Activated T-helper 1 cell treated with anti-CD3 and anti-CD28 coated beads, Interleukin-12 subunit alpha, Interleukin-12 subunit beta, Interleukin-2, Interleukin-4 antibody, amounts not matched to agents 30 ng/mL and 10 ng/mL and 1 ng/mL, durations not matched to agents 14 hours and 24 hours and 36 hours (primary cell): ENCODE measurements at regions of chr3 and their contacts with region 1.

Region 1: GRCh38 chr3:27960133-27960532 is 238.0 kb upstream of the EOMES start:
- DNase-seq: no peak
- H3K4me3 Mint-ChIP-seq: no peak overlapping the region
- H3K27ac Mint-ChIP-seq: no peak overlapping the region
- H3K4me1 Mint-ChIP-seq: peaks cover 20% of the 10 kb centered on the region
- H3K27me3 Mint-ChIP-seq: no peaks in the 10 kb centered on the region

Region 2: GRCh38 chr3:27659279-27660021 is 300.7 kb before region 1 on chr3:
- intact Hi-C with region 1: no loop called
- DNase-seq: no peak
- H3K4me3 Mint-ChIP-seq: no peak overlapping the region
- H3K27ac Mint-ChIP-seq: no peak overlapping the region
- H3K4me1 Mint-ChIP-seq: peaks cover 7% of the 10 kb centered on the region
- H3K27me3 Mint-ChIP-seq: no peaks in the 10 kb centered on the region

Region 3: GRCh38 chr3:27914199-27914598 is 45.9 kb before region 1 on chr3:
- intact Hi-C with region 1: no loop called
- DNase-seq: no peak
- H3K4me3 Mint-ChIP-seq: no peak overlapping the region
- H3K27ac Mint-ChIP-seq: no peak overlapping the region
- H3K4me1 Mint-ChIP-seq: no peaks in the 10 kb centered on the region
- H3K27me3 Mint-ChIP-seq: no peaks in the 10 kb centered on the region

Region 4: DNA sequence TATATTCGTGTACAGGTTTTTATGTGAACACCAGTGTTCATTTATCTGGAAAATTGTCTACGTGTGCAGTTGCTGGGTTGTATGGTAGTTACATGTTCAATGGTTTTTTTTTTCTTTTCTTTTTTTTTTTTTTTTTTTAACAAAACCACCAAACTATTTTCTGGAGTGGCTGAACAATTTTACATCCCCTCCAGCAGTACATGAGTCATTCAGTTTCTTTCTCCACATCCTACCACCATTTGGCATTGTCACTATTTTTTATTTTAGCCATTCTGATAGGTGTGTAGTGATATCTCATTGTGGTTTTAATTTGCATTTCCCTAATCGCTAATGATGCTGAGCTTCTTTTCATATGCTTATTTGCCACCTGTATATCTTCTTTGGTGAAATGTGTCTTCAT is 18.3 kb after region 1 on chr3:
- intact Hi-C with region 1: loop called (anchors 2 kb)
- DNase-seq: no peak
- H3K4me3 Mint-ChIP-seq: no peak overlapping the region
- H3K27ac Mint-ChIP-seq: no peak overlapping the region
- H3K4me1 Mint-ChIP-seq: peaks cover 6% of the 10 kb centered on the region
- H3K27me3 Mint-ChIP-seq: peaks cover 3% of the 10 kb centered on the region

Region 5: GRCh38 chr3:28406241-28406640 is 446.1 kb after region 1 on chr3:
- intact Hi-C with region 1: no loop called
- DNase-seq: no peak
- H3K4me3 Mint-ChIP-seq: no peak overlapping the region
- H3K27ac Mint-ChIP-seq: no peak overlapping the region
- H3K4me1 Mint-ChIP-seq: no peaks in the 10 kb centered on the region
- H3K27me3 Mint-ChIP-seq: no peaks in the 10 kb centered on the region